ENCODE measurements at regions of chr1 and their contacts with region 1.

Region 1: GRCh38 chr1:212455803-212456528 is 23.2 kb downstream of the NENF start:
- DNase-seq: peak; percentile 47
- H3K4me3 ChIP-seq: peak overlapping the region; percentile 20; the same call in 1 of the 2 replicates
- CTCF ChIP-seq: peak; percentile 92

Region 2: GRCh38 chr1:211675230-211676105 is 780.5 kb before region 1 on chr1 and contains the start of gene NEK2:
- CTCF ChIA-PET with region 1: interaction called, 79 read pairs
- POLR2A ChIA-PET with region 1: interaction called, 3 read pairs
- DNase-seq: no peak
- H3K4me3 ChIP-seq: peak within 1 kb of the TSS; percentile 77
- CTCF ChIP-seq: no peak

Region 3: DNA sequence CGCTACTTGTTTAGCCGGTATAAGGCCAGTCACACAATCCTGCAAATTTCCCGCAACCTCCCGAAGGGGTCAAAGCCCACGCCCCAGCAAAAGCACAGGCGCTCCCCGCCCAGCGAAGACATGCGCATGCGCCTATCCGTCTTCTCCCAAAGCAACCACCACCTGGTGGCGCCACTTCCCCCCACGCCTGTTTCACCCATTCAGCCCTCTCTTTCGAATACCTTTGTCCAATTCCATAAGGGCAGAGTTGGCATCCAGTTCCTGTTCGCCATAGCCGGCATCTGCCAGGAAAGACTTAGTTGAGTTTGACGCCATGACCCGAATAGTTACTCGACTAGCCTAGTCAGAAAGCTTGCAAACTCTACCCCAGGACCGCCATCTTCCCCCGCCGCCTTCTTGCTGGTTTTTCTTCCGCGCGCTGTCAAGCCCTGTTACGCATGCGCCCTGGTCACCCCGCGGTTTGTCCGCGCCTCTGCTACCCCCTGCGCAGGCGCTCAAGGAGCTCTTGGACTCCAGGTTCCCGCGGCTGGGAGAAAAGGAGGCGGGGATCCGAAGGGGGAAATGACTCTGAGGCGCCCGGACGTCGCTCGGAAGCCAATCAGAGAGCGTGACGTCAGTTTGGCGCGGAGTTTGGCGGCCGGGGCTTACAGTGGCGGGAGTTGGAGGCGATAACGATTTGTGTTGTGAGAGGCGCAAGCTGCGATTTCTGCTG is 420.7 kb before region 1 on chr1 and contains the starts of genes DTL and INTS7:
- CTCF ChIA-PET with region 1: interaction called, 73 read pairs
- POLR2A ChIA-PET with region 1: no interaction called
- DNase-seq: peak; percentile 95
- H3K4me3 ChIP-seq: peak within 1 kb of the TSS; percentile 91
- CTCF ChIP-seq: peak; percentile 69

Region 4: GRCh38 chr1:212291505-212292134 is 164.3 kb before region 1 on chr1:
- CTCF ChIA-PET with region 1: interaction called, 22 read pairs
- POLR2A ChIA-PET with region 1: no interaction called
- DNase-seq: no peak
- H3K4me3 ChIP-seq: no peak overlapping the region
- CTCF ChIP-seq: peak; percentile 57

Region 5: DNA sequence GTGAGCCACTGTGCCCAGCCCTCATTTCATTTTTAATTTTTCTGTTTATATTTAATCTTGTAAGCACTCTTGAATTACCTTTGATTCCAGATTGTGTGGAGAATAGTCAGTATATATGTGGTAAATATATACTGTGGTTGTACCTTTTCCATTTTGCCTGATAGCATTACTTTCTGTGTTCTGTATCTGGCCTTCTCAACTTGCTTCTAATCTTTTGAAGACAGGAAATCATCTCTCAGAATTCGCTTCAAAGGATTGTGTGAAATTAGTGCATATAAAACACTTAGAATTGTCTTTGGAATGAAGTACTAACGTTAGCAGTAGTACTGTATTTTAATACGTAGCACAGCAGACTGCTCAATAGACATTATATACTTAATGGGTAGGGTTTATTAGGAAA is 132.9 kb before region 1 on chr1:
- CTCF ChIA-PET with region 1: no interaction called
- POLR2A ChIA-PET with region 1: no interaction called
- DNase-seq: no peak
- H3K4me3 ChIP-seq: no peak overlapping the region
- CTCF ChIP-seq: no peak

Region 6: DNA sequence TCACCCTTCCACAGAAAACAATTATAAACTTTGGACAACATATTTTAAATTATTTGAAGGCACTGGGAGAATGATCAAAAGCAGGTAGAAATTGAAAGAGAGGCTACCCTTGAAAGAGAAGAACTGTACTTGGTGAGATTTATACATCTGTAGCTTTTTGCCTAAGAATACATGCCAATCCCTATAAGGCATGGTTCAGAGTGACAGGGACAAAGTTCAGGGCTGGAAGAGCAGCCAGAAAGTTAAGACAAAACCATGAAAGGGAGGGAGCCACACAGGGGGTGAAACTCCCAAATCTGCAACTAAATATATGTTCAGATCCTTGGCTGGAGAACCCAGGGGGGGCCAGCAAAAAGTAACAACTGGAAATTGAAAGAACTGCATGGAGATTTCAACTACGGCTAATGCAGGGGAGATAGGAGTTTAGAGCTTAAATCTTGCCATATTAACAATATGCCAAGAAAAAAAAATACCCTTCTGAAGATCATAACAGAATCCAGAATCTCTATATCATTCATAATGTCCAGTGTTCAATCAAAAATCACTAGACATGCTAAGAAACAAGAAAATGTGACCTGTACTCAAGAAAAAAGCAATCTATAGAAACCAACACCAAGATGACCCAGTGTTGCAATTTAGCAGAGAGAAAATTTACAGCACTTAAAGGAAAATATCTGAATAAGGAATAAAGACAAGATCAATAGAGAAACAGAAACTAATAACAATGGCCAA is 66.8 kb before region 1 on chr1:
- CTCF ChIA-PET with region 1: no interaction called
- POLR2A ChIA-PET with region 1: no interaction called
- DNase-seq: no peak
- H3K4me3 ChIP-seq: no peak overlapping the region
- CTCF ChIP-seq: no peak

Region 7: DNA sequence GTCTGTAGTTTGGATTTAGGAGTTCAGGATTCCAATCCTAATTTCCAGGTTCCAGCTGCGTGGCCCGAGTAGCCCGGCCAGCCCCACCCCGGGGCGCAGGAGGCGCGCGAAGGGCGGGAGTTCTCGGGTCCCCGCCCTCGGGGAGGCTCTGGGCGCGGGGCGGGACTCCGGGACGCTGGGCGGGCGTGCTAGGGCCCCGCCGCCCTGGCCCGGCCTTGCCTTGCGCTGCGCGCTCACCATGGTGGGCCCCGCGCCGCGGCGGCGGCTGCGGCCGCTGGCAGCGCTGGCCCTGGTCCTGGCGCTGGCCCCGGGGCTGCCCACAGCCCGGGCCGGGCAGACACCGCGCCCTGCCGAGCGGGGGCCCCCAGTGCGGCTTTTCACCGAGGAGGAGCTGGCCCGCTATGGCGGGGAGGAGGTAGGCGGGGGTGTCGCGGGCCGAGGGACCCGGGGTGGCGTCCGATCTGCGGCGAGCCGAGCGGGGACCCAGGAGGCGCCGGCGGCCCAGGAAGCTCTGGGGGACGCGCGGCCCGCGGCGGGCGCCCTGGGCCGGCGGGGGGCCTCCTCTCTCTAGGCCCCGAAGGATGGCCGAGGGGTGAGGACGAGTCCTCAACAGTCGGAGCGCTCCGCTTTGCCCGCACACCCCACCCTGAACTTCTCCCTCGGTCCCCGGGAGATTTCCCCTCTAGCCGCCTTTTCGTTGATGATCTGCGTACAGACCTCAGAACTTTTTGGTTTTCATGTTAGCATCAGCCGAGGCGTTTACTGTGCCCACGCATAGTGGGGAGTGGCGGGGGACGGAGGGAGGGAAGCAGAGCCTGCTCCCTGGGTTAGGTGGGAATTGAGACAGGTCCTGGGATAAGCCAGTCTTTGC is 23.0 kb before region 1 on chr1 and contains the start of gene NENF:
- CTCF ChIA-PET with region 1: interaction called, 23 read pairs
- POLR2A ChIA-PET with region 1: interaction called, 3 read pairs
- DNase-seq: no peak
- H3K4me3 ChIP-seq: peak within 1 kb of the TSS; percentile 65
- CTCF ChIP-seq: no peak

Region 8: DNA sequence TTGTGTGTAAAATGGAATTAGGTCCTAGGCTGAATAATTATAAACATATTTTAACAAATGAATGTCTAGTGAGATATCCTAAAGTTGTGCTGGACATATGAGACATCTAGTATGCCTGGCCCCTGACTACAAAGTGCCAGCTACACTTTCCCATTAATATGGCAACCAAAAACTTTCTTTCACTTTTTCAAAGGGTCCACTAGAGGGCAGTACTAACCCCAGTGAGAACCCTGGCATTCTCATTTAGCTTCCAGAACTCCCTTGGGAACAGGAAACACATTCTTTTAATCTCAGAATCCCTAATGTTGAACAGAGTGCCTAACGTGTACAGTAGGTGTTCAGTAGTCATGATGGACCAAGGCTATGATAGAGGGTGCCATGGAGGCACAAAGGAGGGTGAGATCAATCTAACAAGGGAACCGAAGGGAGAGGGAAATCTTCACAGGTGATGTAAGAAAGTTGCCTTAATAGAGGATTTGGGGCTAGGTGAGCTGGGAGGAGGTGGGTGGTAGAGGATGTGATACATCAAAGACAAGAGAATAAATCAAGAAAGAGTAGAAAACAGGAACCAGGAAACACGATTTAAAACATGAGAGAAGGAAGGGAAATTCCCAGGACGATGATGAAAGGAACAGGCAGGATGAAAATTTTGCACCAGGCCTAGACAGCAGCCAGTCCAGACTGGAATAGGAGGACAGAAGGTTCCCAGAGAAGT is 294.0 kb after region 1 on chr1:
- CTCF ChIA-PET with region 1: interaction called, 18 read pairs
- POLR2A ChIA-PET with region 1: no interaction called
- DNase-seq: no peak
- H3K4me3 ChIP-seq: no peak overlapping the region
- CTCF ChIP-seq: peak; percentile 43